Breast epithelium (tissue), 4 donors: ENCODE measurements at regions of chr12 and their contacts with region 1.

Region 1: GRCh38 chr12:115243933-115244807 is 560.2 kb upstream of the TBX3 start:
- DNase-seq: no peak
- H3K4me3 ChIP-seq: no peak overlapping the region
- H3K27ac ChIP-seq: no peak overlapping the region
- H3K4me1 ChIP-seq: no peaks in the 10 kb centered on the region
- H3K27me3 ChIP-seq: no peaks in the 10 kb centered on the region
- CTCF ChIP-seq: no peak
- POLR2A ChIP-seq: no peak

Region 2: GRCh38 chr12:115208098-115208497 is 36.1 kb before region 1 on chr12:
- intact Hi-C with region 1: loop called (anchors 1 kb)
- DNase-seq: no peak
- H3K4me3 ChIP-seq: no peak overlapping the region
- H3K27ac ChIP-seq: no peak overlapping the region
- H3K4me1 ChIP-seq: no peaks in the 10 kb centered on the region
- H3K27me3 ChIP-seq: no peaks in the 10 kb centered on the region
- CTCF ChIP-seq: no peak
- POLR2A ChIP-seq: no peak

Region 3: GRCh38 chr12:116277393-116278278 is 1033.5 kb after region 1 on chr12 and contains the start of gene MED13L:
- intact Hi-C with region 1: no loop called
- DNase-seq: peak; percentile 88 to 89
- H3K4me3 ChIP-seq: peak within 1 kb of the TSS; percentile 70 to 98 (median 74)
- H3K27ac ChIP-seq: peak within 1 kb of the TSS; percentile 97 to 100
- H3K4me1 ChIP-seq: no peaks in the 10 kb centered on the region
- H3K27me3 ChIP-seq: no peaks in the 10 kb centered on the region
- CTCF ChIP-seq: peak in 1 of 3 donors; percentile 41
- POLR2A ChIP-seq: no peak
- total RNA-seq, gene MED13L: 248 to 387 (median 279) TPM

Region 4: DNA sequence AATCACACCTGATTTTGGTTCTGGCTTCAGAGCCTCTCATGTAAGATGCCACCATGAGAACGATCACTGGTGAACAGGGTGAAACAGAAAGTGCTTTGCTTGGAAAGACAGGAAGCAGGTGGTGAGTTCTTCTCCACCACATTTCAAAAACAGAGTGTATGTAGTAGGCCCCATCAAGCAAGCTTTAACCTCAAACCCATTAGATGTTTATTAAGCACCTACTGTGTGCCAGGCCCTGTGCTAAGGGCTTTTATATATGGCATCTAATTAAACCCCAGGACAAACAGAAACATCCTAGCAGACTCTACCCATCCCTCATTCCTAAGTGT is 1081.1 kb after region 1 on chr12:
- intact Hi-C with region 1: no loop called
- DNase-seq: no peak
- H3K4me3 ChIP-seq: no peak overlapping the region
- H3K27ac ChIP-seq: peak overlapping the region in 1 of 2 donors; percentile 58
- H3K4me1 ChIP-seq: peaks cover 0 to 7% of the 10 kb centered on the region in 2 donors
- H3K27me3 ChIP-seq: no peaks in the 10 kb centered on the region
- CTCF ChIP-seq: no peak
- POLR2A ChIP-seq: no peak